ENCODE measurements at regions of chr16 and their contacts with region 1.

Region 1: GRCh38 chr16:86519649-86520316 is 9.5 kb downstream of the FOXF1 start:
- DNase-seq: no peak
- H3K4me3 ChIP-seq: peak overlapping the region; percentile 21 to 46 (median 35)
- H3K27ac ChIP-seq: peak overlapping the region in 3 of 4 donors; percentile 18 to 98 (median 95)
- H3K4me1 ChIP-seq: peaks cover 12 to 67% (median 51%) of the 10 kb centered on the region in 4 donors
- H3K27me3 ChIP-seq: peaks cover 0 to 32% (median 2%) of the 10 kb centered on the region in 4 donors
- CTCF ChIP-seq: peak; percentile 90 to 95 (median 93)
- EP300 ChIP-seq: no peak
- POLR2A ChIP-seq: no peak

Region 2: GRCh38 chr16:85821441-85822135 is 698.2 kb before region 1 on chr16:
- intact Hi-C with region 1: loop called (anchors 5 kb)
- DNase-seq: peak; percentile 95
- H3K4me3 ChIP-seq: no peak overlapping the region
- H3K27ac ChIP-seq: no peak overlapping the region
- H3K4me1 ChIP-seq: peaks cover 7 to 23% (median 15%) of the 10 kb centered on the region in 4 donors
- H3K27me3 ChIP-seq: no peaks in the 10 kb centered on the region
- CTCF ChIP-seq: peak; percentile 98 to 99 (median 98)
- EP300 ChIP-seq: no peak
- POLR2A ChIP-seq: no peak

Region 3: DNA sequence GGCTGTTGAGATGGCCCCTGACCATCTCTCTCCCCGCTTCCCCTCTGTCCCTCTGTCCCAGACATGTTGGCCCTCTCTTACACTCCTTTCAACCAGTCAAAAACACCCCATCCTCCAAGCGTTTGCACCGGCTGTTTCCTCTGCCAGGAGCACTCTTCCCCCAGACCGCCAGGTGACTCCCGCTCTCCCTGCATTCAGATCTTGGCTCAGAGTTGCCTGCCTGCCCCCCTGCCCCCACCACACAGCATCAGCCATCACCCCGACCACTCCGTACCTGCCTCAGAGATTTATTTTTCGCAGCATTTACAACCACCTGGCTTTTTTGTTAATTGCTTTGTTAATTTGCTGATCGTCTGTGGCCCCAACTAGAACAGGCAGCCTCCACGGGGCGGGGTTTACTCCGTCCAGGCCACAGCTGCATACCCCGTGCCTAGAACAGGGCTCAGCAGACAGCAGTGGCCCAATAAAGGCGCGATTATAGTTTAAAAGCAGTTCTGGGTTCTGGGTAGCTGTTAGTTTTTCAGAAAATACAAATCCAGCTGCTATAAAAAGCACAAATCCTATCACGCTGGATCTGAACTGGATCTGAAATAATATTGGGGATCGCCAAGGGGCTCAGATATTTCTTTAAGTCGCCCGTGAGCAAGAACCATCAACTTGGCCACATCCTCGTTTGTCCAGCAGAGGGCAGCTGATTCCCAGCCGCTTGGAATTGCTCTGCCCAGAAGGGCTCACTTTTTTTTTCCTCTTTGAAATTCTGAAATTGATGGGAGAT is 447.3 kb before region 1 on chr16:
- intact Hi-C with region 1: loop called (anchors 2 kb)
- DNase-seq: no peak
- H3K4me3 ChIP-seq: no peak overlapping the region
- H3K27ac ChIP-seq: no peak overlapping the region
- H3K4me1 ChIP-seq: peaks cover 0 to 25% (median 8%) of the 10 kb centered on the region in 4 donors
- H3K27me3 ChIP-seq: no peaks in the 10 kb centered on the region
- CTCF ChIP-seq: peak; percentile 80 to 88 (median 84)
- EP300 ChIP-seq: no peak
- POLR2A ChIP-seq: no peak

Region 4: GRCh38 chr16:86252596-86252995 is 267.2 kb before region 1 on chr16:
- intact Hi-C with region 1: loop called (anchors 5 kb)
- DNase-seq: no peak
- H3K4me3 ChIP-seq: no peak overlapping the region
- H3K27ac ChIP-seq: no peak overlapping the region
- H3K4me1 ChIP-seq: no peaks in the 10 kb centered on the region
- H3K27me3 ChIP-seq: no peaks in the 10 kb centered on the region
- CTCF ChIP-seq: peak; percentile 42 to 58 (median 43)
- EP300 ChIP-seq: no peak
- POLR2A ChIP-seq: no peak

Region 5: GRCh38 chr16:86300746-86301481 is 218.9 kb before region 1 on chr16:
- intact Hi-C with region 1: loop called (anchors 5 kb)
- DNase-seq: no peak
- H3K4me3 ChIP-seq: peak overlapping the region in 2 of 4 donors; percentile 19 to 24
- H3K27ac ChIP-seq: peak overlapping the region in 1 of 4 donors; percentile 22
- H3K4me1 ChIP-seq: peaks cover 3 to 51% (median 39%) of the 10 kb centered on the region in 4 donors
- H3K27me3 ChIP-seq: no peaks in the 10 kb centered on the region
- CTCF ChIP-seq: no peak
- EP300 ChIP-seq: no peak
- POLR2A ChIP-seq: no peak

Region 6: DNA sequence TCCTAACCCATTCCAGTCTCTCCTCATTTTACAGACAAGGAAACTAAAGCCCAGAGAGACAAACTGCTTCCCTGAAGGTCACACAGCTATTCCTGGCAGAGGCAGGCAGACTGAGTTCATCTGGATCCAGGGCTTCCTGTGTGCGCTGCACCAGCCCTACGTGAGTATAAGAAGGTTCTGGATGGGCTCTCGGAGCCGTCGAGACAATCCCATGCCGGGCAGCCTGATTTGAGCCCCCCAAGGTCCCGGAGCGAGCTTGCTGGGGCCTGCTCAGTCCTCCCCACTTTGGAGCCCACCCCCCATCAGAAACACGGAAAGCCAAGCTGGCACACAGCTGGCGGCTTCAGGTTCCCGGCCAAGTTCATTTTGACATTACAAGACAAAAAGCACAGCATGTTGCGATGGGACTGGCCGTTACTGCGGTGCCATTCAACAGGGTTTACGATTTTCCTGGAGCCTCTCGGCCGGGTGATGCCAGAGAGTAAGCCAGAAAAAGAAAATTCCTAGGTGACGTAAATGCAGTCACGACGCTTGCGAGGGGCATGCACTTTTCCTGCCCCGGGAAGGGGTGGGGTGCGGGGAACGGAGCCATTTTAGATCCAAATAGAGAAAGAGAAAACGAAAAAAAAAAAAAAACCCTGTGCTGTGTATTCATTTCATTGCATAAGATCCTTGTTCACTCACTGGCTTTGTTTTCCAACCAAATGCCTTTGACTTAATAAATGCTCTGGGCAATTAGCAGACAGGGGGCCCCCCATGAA is 176.6 kb before region 1 on chr16:
- intact Hi-C with region 1: loop called (anchors 2 kb)
- DNase-seq: peak; percentile 95
- H3K4me3 ChIP-seq: peak overlapping the region; percentile 26 to 48 (median 36)
- H3K27ac ChIP-seq: peak overlapping the region; percentile 92 to 96 (median 96)
- H3K4me1 ChIP-seq: peaks cover 14 to 50% (median 46%) of the 10 kb centered on the region in 4 donors
- H3K27me3 ChIP-seq: no peaks in the 10 kb centered on the region
- CTCF ChIP-seq: no peak
- EP300 ChIP-seq: peak; percentile 98
- POLR2A ChIP-seq: no peak

Region 7: DNA sequence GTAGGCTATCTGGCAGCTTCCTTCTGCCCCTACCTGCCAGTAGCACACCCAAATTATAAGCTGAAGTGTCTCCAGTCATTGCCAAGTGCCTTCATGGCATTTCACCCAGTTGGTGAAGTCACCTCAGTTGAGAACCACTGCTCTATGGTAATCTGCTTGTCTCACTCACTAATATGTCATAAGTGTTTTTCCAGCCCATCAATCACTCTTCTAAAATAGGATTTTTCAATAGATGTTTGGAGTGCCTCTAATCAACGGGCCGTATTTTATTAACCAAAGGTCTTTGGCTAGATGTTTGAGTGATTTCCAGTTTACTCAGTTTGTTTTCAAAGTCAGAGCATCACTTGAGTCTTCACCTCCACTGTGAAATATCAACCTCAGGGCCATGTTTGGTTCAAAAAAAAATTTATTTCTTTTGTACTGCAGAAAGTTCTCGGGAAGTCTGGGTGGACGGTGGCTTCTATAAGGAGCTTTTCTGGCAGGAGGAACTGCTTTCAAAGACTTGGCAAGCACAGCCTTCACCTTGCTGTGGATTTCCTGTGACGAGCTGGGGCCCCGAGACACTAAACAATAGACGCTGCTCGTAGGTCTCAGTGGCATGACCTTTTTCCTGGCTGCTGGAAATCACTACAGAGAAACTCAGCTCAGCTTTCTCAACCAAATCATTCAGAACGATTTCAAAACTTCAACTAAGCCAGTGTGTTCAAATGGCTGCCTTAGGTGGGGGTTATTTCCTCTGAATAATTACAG is 104.6 kb before region 1 on chr16:
- intact Hi-C with region 1: no loop called
- DNase-seq: no peak
- H3K4me3 ChIP-seq: no peak overlapping the region
- H3K27ac ChIP-seq: peak overlapping the region; percentile 55 to 74 (median 73)
- H3K4me1 ChIP-seq: peaks cover 3 to 22% (median 19%) of the 10 kb centered on the region in 4 donors
- H3K27me3 ChIP-seq: no peaks in the 10 kb centered on the region
- CTCF ChIP-seq: no peak
- EP300 ChIP-seq: no peak
- POLR2A ChIP-seq: no peak

Measured in esophagus muscularis mucosa (tissue), 4 donors.